ENCODE measurements at regions of chr1 and their contacts with region 1.

Region 1: DNA sequence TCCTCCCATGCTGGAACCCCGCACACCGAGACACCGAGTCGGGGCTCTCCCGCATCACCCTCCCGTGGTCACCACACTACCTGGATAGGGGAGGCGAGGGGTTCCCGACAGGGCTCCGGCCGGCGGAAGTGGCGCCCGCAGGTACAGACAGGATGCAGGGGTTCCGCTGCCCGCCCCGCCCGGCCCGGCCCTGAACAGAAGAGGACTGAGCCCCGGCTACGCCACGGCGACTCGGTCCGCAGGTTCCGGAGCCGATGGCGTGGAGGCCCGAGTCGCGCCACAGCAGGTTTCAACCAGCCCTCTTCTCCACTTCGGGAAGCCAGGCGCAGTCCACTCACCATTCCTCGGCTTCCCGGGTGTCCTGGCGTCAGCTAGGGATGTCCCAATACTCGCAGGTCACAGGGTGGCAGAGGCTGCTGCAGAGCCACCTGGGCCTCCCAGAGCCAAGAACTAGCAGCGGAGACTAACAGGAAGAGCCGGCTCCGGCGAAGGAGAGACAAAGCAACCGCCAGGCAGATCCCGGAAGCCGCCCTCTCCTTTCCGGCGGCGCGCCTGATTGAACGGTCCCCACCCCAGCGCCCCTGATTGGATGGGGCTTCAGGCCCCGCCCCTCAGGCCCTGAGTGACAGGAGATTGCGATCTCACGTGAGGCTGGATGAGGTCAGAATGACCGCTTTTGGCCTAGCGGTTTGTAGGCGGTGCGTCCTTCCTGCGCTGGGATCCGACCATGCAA is at the start of gene ZNF669:
- DNase-seq: peak; percentile 95 to 98 (median 98)
- H3K4me3 ChIP-seq: peak within 1 kb of the TSS; percentile 67 to 98 (median 90)
- H3K27ac ChIP-seq: peak within 1 kb of the TSS in 55 of 59 donors; percentile 37 to 93 (median 77)
- H3K27me3 ChIP-seq: no peaks in the 10 kb centered on the region
- CTCF ChIP-seq: peak in 24 of 56 donors; percentile 2 to 47 (median 22)
- total RNA-seq, gene ZNF669: 4.1 to 11.4 (median 7.1) TPM

Region 2: DNA sequence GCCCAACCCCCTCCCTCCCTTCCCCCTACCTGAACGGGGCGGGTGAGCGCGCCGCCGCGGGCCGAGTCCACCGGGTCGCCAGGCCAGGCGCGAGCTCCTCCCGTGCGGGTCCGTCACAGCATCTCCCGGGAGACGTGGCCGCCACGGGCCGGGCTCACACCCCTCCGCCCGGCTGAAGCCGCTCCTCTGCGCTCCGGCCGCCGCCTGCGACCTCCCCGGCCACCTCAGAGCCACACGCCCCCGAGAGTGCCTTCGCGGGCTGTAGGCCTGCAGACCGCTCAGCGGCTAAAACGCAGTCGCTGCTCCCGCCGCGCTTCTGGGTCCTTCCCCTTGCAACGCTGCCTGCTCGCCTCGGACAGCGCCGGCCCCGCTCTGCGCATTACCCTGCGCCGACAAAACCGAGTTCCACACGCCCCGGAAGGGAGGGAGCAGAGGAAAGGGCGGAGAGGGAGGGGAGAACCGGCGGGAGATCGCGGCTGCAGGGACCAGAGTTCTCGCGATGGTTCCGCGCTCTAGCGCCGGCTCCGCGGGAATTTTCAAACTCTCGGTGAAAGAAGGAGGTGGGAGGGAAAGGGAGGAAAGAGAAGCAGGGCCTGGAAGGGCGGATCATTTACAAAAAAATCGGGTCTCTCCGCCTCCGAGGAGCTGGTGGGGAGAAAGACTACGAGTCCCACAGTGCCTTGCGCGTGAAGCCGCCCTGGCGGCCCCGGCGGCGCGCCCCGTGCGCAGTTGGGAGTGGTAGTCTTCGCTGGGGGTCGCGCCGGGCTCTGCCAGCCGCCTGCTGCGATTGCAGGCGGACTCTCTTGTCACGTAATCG is 172.3 kb before region 1 on chr1 and contains the start of gene AHCTF1:
- intact Hi-C with region 1: loop called (anchors 5 to 10 kb)
- DNase-seq: peak; percentile 85 to 97 (median 96)
- H3K4me3 ChIP-seq: peak within 1 kb of the TSS; percentile 65 to 97 (median 90)
- H3K27ac ChIP-seq: peak within 1 kb of the TSS; percentile 76 to 99 (median 96)
- H3K27me3 ChIP-seq: no peaks in the 10 kb centered on the region
- CTCF ChIP-seq: peak in 36 of 56 donors; percentile 5 to 48 (median 30)
- total RNA-seq, gene AHCTF1: 28.7 to 55.3 (median 41.8) TPM

Region 3: GRCh38 chr1:247078261-247079140 is 25.5 kb before region 1 on chr1 and contains the start of gene ZNF670:
- intact Hi-C with region 1: loop called in 1 of 2 experiments (anchors 2 kb)
- DNase-seq: peak; percentile 90 to 98 (median 97)
- H3K4me3 ChIP-seq: peak within 1 kb of the TSS; percentile 61 to 99 (median 92)
- H3K27ac ChIP-seq: peak within 1 kb of the TSS in 44 of 59 donors; percentile 4 to 92 (median 62)
- H3K27me3 ChIP-seq: no peaks in the 10 kb centered on the region
- CTCF ChIP-seq: peak in 18 of 56 donors; percentile 3 to 44 (median 18)
- total RNA-seq, gene ZNF670: 2.8 to 9.1 (median 6.1) TPM

Region 4: GRCh38 chr1:247331172-247331991 is 227.4 kb after region 1 on chr1 and contains the start of gene ZNF496:
- intact Hi-C with region 1: loop called in 1 of 2 experiments (anchors 5 kb)
- DNase-seq: peak; percentile 48 to 86 (median 71)
- H3K4me3 ChIP-seq: peak within 1 kb of the TSS; percentile 69 to 99 (median 93)
- H3K27ac ChIP-seq: peak within 1 kb of the TSS; percentile 61 to 94 (median 85)
- H3K27me3 ChIP-seq: no peaks in the 10 kb centered on the region
- CTCF ChIP-seq: peak in 1 of 56 donors; percentile 4
- total RNA-seq, gene ZNF496: 18.3 to 43.2 (median 27.3) TPM